Activated naive CD4-positive, alpha-beta T cell treated with anti-CD3 and anti-CD28 coated beads, Interleukin-2, amount 10 ng/mL, durations not matched to agents 7 days and 5 days (primary cell): ENCODE measurements at regions of chr2 and their contacts with region 1.

Region 1: GRCh38 chr2:118882709-118883210 is 35.3 kb upstream of the EN1 start:
- DNase-seq: peak; percentile 65
- H3K4me3 Mint-ChIP-seq: no peak overlapping the region
- H3K27ac Mint-ChIP-seq: no peak overlapping the region
- H3K4me1 Mint-ChIP-seq: peaks cover 4% of the 10 kb centered on the region
- H3K27me3 Mint-ChIP-seq: peaks cover 22% of the 10 kb centered on the region

Region 2: DNA sequence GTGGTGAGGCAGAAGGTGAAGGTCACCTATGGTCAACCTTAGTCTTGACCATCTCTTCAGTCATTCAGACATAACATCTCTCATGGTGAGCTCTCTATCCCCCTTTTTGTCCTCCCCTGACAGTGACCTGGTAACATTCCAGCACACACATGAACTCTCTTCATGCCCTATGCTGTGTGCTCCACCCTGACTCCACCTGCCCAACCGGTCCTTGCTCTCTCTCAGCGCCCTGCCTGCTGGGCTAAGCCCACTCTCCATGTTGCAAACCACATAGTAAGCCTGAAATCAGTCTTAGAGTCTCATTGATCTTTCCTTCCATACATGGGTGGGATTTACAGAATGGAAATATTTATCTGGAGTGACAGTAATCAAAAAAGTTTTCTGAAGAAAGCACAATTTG is 112.0 kb after region 1 on chr2:
- CTCF ChIA-PET with region 1: no interaction called
- DNase-seq: no peak
- H3K4me3 Mint-ChIP-seq: no peak overlapping the region
- H3K27ac Mint-ChIP-seq: no peak overlapping the region
- H3K4me1 Mint-ChIP-seq: no peaks in the 10 kb centered on the region
- H3K27me3 Mint-ChIP-seq: no peaks in the 10 kb centered on the region

Region 3: GRCh38 chr2:119126650-119127049 is 243.9 kb after region 1 on chr2:
- CTCF ChIA-PET with region 1: interaction called, 20 read pairs
- DNase-seq: peak; percentile 53
- H3K4me3 Mint-ChIP-seq: no peak overlapping the region
- H3K27ac Mint-ChIP-seq: no peak overlapping the region
- H3K4me1 Mint-ChIP-seq: no peaks in the 10 kb centered on the region
- H3K27me3 Mint-ChIP-seq: peaks cover 13% of the 10 kb centered on the region

Region 4: DNA sequence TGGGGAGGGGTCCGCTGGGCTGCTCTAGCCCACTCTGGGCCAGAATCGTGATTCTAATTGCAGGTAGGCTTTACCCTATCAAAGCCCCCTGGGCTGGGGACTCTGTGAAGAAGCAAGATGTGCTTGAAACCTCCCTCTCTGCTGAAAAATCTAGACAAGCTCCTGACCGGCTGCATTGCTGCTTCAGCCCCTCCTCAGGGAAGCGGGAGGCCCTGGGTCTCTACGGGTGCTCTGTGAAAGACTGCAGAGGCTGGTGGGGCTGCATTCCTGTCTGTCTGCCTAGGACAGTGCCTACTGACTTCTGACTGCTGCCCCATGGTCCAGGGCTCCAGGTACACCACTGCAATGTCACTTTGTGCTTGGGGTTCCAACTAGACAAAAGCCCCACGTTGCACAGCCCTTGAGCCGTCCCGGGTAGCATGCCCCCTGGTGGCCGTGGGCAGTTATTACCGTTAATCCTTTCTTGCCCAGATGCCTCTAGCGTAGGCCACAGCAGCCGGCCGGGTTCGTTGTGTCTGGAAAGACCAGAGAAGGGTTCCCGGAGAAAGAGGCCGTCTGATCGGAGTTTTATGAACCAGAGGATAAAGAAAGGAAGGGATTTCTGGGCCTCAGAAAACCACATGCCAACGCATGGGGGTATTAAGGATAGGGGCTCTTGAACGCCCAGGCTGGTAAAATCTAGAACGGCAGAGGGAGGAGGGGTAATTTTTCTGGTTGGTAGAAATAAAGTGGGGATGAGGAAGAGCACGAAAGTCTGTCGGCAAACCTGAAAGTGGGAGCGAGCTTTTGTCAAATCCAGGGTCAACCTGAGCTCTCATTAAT is 291.7 kb after region 1 on chr2:
- CTCF ChIA-PET with region 1: interaction called, 49 read pairs
- DNase-seq: peak; percentile 58
- H3K4me3 Mint-ChIP-seq: no peak overlapping the region
- H3K27ac Mint-ChIP-seq: no peak overlapping the region
- H3K4me1 Mint-ChIP-seq: no peaks in the 10 kb centered on the region
- H3K27me3 Mint-ChIP-seq: peaks cover 10% of the 10 kb centered on the region

Region 5: GRCh38 chr2:119476301-119477021 is 593.7 kb after region 1 on chr2:
- CTCF ChIA-PET with region 1: interaction called, 10 read pairs
- DNase-seq: peak; percentile 47
- H3K4me3 Mint-ChIP-seq: no peak overlapping the region
- H3K27ac Mint-ChIP-seq: no peak overlapping the region
- H3K4me1 Mint-ChIP-seq: no peaks in the 10 kb centered on the region
- H3K27me3 Mint-ChIP-seq: peaks cover 4% of the 10 kb centered on the region